GM10248 (cell line): ENCODE measurements at regions of chr19 and their contacts with region 1.

Region 1: DNA sequence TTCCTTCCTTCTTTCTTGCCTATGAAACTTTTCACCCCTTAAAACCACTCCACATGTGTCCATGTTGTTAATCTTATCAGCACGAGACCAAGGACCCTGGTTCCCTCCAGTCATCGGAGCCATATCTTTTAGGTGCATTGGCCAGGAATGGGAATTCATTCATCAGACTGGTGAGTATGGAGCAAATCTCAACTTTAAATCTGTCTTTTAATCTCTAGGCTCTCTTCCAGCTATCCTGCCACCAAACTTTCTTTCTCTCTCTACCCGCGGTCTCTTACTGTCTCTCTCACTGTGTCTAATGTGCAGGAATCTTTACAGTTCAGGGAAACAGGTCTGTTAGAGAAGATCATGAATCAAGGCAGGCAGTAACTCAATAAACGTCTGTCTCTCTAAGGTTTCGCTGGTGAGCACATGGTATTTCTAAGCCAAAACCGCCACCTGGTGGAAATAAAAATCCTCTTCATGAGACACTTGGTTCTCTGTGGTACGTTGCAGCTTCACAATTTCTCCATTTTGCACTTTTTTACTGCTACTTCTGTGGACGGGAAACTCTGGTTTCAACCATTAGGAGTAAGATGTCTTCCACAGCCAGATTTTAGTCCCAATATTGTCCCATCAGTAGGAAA is 16.1 kb downstream of the LGALS16 start:
- DNase-seq: peak; percentile 35
- CTCF ChIP-seq: peak; percentile 54

Region 2: DNA sequence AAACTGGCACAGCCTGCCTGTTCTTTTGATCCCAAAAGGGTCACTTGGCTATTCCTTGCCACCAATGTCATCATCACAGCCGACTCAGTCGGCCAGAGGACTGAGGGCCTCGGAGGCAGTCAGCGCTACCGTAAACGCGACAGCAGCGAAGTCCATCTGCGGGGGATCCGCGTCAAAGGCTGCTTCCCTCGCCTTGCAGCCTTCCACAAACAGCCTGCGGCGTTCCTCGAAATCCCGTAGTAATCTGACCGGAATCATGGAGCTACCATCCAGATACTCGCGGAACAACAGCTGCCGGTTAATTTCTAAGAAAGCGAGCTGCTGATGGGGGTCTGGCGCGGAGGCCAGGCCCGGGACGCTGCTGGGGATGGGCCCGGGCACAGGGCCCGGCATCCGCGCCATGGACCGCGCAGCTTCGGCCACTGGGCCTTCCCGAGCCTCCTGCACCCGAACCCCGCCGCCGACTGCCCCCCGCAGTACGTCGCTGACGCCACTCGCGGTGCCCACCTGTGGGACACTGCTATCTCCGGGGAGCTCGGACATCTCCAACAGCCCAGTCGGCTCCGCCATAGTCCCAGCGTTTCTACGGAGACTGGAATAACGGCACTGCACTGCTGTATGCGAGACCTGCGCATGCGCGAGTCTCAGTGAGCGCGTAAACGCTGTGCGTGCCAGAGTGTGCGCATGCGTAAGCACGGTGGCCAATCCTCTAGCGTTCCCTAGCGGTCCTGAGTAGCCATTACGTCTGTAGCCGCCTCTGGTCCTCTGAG is 139.4 kb before region 1 on chr19 and contains the start of gene EID2B:
- CTCF ChIA-PET with region 1: interaction called, 25 read pairs
- POLR2A ChIA-PET with region 1: no interaction called
- DNase-seq: peak; percentile 97
- CTCF ChIP-seq: peak; percentile 97

Region 3: DNA sequence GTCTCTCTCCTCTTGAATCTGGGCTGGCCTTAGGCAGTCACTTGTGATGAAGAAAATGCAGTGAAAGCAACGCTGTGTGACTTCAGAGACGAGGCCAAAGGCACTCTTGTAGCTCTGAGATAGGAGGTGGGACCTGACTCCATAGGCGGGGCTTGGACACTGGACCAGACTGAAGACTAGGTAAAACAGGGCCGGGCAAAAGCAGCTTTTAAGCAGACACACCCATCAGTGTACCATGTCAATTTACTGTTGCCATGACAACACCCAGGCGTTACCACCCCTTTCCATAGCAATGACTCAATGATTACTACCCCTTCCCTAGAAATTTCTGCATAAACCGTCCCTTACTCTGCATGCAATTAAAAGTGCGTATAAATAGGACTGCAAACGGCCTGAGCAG is 125.3 kb before region 1 on chr19:
- CTCF ChIA-PET with region 1: interaction called, 144 read pairs
- POLR2A ChIA-PET with region 1: no interaction called
- DNase-seq: no peak
- CTCF ChIP-seq: no peak

Region 4: GRCh38 chr19:39563408-39563807 is 108.4 kb before region 1 on chr19:
- CTCF ChIA-PET with region 1: interaction called, 22 read pairs
- POLR2A ChIA-PET with region 1: no interaction called
- DNase-seq: no peak
- CTCF ChIP-seq: no peak

Region 5: GRCh38 chr19:39645800-39646411 is 25.9 kb before region 1 on chr19:
- CTCF ChIA-PET with region 1: no interaction called
- POLR2A ChIA-PET with region 1: no interaction called
- DNase-seq: no peak
- CTCF ChIP-seq: no peak

Region 6: GRCh38 chr19:39765091-39766076 is 93.5 kb after region 1 on chr19:
- CTCF ChIA-PET with region 1: interaction called, 67 read pairs
- POLR2A ChIA-PET with region 1: no interaction called
- DNase-seq: no peak
- CTCF ChIP-seq: peak; percentile 38